ENCODE measurements at regions of chr1 and their contacts with region 1.

Region 1: DNA sequence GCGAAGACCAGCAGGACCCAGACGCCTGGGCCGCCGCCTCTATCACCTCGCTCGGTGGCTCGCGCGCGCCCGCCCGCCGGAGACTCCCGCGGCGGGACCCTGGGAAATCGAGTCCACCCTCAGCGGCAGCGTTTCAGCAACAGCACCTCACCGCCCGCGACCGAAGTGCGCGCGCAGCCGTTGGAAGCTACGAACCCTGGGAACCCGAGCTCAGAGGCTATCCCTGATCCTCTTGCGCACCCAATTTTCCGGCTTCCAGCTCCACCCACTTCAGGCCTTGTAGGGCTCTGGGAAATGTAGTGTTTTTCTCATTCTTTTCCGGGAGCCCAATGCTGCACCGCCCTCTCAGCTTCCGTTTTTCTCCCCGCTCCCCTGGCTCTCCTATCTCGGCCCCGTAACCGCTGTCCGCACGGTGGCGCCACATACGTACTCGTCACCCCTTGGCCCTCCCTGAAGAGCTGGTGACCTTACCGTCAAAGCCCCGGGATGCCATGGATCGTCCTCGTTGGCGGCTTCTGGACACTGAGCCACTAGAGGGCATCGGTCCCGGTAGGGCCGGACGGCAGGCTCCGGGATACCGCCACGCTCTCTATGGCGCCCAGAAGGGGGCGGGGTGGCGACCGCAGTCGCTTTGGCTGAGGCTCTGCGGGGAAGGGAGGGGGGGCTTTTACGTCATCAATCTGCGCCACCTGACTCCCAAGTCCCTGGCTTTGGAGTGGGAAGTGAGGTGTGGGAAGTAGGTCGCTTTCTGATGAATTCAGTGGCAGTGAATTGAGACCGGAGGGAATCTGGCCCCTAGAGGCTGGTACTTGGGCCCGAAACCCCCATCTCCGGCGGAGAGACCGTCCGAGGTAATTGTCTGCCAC is at the starts of genes ODR4 and TPR:
- DNase-seq: peak; percentile 97 to 98
- H3K4me3 ChIP-seq: peak within 1 kb of the TSS; percentile 57 to 96 (median 77)
- H3K27ac ChIP-seq: peak within 1 kb of the TSS; percentile 95 to 98 (median 98)
- H3K4me1 ChIP-seq: peaks cover 14 to 21% of the 10 kb centered on the region in 2 donors
- H3K27me3 ChIP-seq: no peaks in the 10 kb centered on the region
- CTCF ChIP-seq: peak; percentile 57 to 98 (median 91)
- POLR2A ChIP-seq: peak in 1 of 2 donors; percentile 91
- total RNA-seq, gene ODR4: 25.1 to 35.4 (median 29.9) TPM
- total RNA-seq, gene TPR: 90.4 to 108 (median 104) TPM

Region 2: GRCh38 chr1:185317034-185317885 is 1058.1 kb before region 1 on chr1 and contains the start of gene IVNS1ABP:
- intact Hi-C with region 1: loop called (anchors 10 kb)
- DNase-seq: peak; percentile 96 to 97
- H3K4me3 ChIP-seq: peak within 1 kb of the TSS; percentile 61 to 96 (median 86)
- H3K27ac ChIP-seq: peak within 1 kb of the TSS; percentile 93 to 98 (median 97)
- H3K4me1 ChIP-seq: peaks cover 28 to 29% of the 10 kb centered on the region in 2 donors
- H3K27me3 ChIP-seq: no peaks in the 10 kb centered on the region
- CTCF ChIP-seq: peak in 3 of 6 experiments; percentile 14 to 38 (median 36)
- POLR2A ChIP-seq: peak; percentile 87 to 96
- total RNA-seq, gene IVNS1ABP: 51.7 to 87.8 (median 61.1) TPM

Region 3: GRCh38 chr1:186272486-186272885 is 102.8 kb before region 1 on chr1:
- intact Hi-C with region 1: no loop called
- DNase-seq: no peak
- H3K4me3 ChIP-seq: no peak overlapping the region
- H3K27ac ChIP-seq: no peak overlapping the region
- H3K4me1 ChIP-seq: no peaks in the 10 kb centered on the region
- H3K27me3 ChIP-seq: no peaks in the 10 kb centered on the region
- CTCF ChIP-seq: no peak
- POLR2A ChIP-seq: no peak

Measured in thyroid gland (tissue), 4 donors.